ENCODE measurements at regions of chr4 and their contacts with region 1.

Region 1: DNA sequence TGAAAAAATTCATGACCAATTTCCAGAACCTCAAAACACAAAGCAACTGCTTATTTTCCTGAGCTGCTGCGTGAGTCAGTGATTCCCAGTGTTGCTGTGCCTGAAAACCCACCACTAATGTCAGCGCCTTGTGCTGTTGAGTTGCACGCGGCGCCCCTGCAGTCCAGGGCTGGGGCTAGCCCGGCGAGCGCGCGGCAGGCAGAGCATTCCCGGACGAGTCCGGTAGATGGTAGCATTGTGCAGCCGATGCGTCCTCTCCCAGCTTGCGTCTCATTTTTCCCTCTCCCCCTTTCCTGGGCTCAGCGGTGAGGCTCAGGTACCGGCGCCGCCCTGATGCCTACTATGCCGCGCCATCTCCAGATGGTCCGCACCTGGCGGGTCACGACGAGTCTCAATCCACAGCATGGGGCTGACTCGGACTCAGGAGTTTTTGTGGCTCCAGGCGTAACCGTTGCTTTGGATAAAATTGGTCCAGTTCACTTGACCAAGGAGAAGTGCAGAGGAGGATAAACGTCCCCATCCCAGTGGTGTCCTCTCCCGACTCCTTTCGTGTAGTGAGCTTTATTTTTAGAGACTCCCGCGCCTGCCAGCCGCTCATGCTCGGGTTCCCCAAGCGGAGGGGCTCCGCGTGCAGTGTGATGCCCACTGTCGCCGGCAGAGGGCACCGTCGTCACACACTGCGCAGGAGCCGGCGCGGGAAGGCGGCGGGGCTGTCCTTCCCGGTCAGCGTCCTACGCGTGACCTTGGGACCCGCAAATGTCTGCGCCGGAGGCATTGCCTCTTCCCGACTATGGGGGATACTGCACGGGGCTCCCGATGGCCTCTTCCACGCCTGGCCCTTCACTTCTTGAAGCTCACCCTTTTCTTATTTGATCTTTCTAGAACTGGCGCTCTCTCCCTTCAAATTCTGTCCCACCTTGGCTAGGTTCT is 53.6 kb upstream of the IGFBP7 start:
- DNase-seq: peak; percentile 90
- ATAC-seq: peak; percentile 98

Region 2: GRCh38 chr4:57037982-57038604 is 125.7 kb before region 1 on chr4:
- intact Hi-C with region 1: loop called (anchors 5 kb)
- DNase-seq: peak; percentile 78
- ATAC-seq: peak; percentile 76

Region 3: GRCh38 chr4:57303012-57303751 is 139.4 kb after region 1 on chr4:
- intact Hi-C with region 1: loop called (anchors 5 kb)
- DNase-seq: no peak
- ATAC-seq: peak; percentile 61

Region 4: DNA sequence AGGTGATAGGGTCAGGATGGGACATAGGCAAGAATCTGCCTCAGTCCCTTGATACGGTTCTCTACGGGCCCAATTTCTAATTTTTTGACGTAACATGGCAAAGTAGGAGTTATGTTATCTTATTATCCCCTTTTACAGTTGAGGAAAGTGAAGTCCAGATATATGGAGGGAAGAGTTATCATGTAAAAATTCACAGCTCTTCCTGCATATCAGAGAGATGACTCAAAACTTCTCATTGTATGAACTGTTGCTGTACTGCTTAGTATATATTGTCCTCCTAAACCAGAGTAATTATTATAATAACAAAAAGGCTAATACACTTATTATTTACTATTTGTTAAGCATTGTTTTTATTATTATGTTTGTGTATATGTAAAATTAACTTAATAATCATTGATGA is 206.9 kb after region 1 on chr4:
- intact Hi-C with region 1: no loop called
- DNase-seq: no peak
- ATAC-seq: no peak

Region 5: DNA sequence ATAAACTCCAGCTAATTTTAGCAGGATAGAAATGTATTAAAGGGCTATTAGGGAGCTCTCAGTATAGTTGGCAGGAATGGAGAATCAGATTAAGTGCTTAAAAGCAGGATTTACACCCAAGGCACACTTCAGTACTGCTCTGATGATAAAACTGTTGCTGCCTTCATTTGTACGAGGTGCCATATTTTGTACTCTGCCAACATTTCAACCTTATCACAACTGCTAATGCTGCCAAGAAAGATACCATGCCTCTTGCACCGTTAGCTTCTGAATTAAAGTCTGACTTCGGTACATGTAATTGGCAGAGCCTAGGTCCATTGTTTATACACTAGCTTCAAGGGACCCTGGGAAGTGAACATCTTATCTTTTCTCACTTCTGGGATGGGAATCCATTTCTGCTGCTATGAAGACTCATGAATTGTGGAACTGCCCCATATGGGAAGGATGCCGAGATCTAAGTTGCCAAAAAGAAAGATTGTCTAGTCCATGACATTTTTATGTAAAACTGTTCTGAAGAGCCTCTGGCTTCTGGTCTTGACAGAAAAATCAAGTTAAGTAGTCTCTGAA is 570.4 kb after region 1 on chr4:
- intact Hi-C with region 1: loop called (anchors 10 kb)
- DNase-seq: no peak
- ATAC-seq: peak; percentile 96

Measured in Right ventricle myocardium superior (tissue), 1 donor.